ENCODE measurements at regions of chr22 and their contacts with region 1.

Region 1: DNA sequence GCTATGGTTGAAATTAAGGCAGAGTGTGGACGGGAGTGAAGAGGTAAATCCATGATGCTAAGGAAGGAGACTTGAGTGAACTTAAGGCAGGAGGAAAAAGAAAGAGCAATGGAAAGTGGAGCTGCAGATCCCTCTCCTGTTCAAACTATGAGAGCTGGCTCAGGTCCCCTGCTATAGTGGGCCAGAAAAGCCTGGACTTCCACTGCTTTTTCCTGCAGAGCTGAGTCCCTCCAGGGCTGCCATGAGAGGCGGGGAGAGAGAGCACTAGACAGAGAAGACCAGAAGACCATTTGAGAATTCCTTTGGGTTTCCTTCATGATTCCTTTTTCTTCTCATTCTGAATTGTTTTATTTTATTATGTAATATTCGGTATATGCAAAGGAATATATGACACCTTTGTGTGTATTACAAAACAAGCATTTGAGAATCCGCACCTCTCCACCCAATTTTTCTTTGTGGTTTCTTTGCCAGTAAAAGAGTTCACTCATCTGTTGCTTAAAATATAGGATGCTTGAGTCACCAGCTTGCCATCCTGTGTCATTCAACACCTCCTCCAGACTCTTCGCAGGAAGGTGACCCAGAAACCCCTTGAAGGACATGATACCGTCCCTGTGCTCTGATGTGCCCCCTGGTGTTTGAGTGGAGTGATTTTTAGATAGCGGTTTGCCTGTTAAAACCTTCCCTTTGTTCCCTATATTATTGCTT is 24.4 kb downstream of the SREBF2 start:
- DNase-seq: peak; percentile 65
- ATAC-seq: peak; percentile 92
- H3K4me3 ChIP-seq: no peak overlapping the region
- H3K27ac ChIP-seq: peak overlapping the region; percentile 53
- H3K4me1 ChIP-seq: peaks cover 36 to 42% of the 10 kb centered on the region in 2 experiments
- H3K27me3 ChIP-seq: no peaks in the 10 kb centered on the region
- CTCF ChIP-seq: peak; percentile 64 to 86 (median 76); a peak in 5 of 6 replicates
- POLR2A ChIP-seq: no peak
- RAD21 ChIP-seq: peak; percentile 65

Region 2: GRCh38 chr22:41403532-41404318 is 453.6 kb before region 1 on chr22:
- CTCF ChIA-PET with region 1: no interaction called
- POLR2A ChIA-PET with region 1: no interaction called
- RAD21 ChIA-PET with region 1: no interaction called
- intact Hi-C with region 1: no loop called
- DNase-seq: peak; percentile 81
- ATAC-seq: peak; percentile 98
- H3K4me3 ChIP-seq: no peak overlapping the region
- H3K27ac ChIP-seq: no peak overlapping the region
- H3K4me1 ChIP-seq: peaks cover 11 to 19% of the 10 kb centered on the region in 2 experiments
- H3K27me3 ChIP-seq: no peaks in the 10 kb centered on the region
- CTCF ChIP-seq: peak; percentile 91 to 96 (median 94)
- POLR2A ChIP-seq: no peak
- RAD21 ChIP-seq: peak; percentile 99

Region 3: DNA sequence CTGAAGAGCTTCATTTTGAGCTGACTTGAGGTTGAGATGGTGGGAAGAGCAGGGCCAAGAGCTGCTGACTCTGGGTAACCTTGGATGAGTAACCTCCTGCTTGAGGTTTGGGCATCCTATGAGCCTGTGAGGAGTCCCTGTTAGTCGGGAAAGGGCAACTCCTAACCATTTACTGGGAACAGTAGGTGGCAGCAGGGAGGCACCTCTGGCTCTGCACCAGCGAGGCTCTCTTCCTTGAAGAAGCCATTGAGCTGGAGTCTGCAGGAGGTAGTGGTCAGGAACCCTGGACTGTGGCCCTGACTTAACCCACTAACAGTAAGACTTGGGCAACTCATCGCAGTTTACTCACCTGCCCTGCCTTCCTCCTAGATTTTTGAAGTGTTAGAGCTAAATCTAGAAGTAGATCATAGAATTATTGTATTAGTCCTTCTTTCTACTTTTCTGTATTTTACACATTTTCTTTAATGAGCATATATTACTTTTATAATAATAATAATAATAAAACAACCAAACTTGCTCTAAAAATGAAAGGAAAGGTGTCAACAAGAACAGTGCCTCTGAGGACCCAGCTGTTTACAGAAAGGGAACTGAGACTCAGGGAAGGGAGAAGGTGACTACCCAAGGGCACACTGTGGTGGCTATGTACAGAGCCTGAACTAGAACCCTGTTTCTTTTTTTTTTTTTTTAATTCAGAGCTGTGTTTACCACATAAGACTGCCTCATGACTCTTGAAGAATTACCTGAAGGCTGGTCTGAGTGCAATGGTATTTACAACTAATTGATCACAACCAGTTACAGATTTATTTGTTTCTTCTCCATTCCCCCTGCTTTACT is 110.5 kb before region 1 on chr22:
- CTCF ChIA-PET with region 1: interaction called, 15 read pairs
- POLR2A ChIA-PET with region 1: no interaction called
- RAD21 ChIA-PET with region 1: no interaction called
- intact Hi-C with region 1: loop called (anchors 2 kb)
- DNase-seq: peak; percentile 69
- ATAC-seq: peak; percentile 100
- H3K4me3 ChIP-seq: no peak overlapping the region
- H3K27ac ChIP-seq: no peak overlapping the region
- H3K4me1 ChIP-seq: peaks cover 0 to 5% of the 10 kb centered on the region in 2 experiments; a peak in 2 of 4 replicates
- H3K27me3 ChIP-seq: no peaks in the 10 kb centered on the region; the same call in 1 of the 2 replicates
- CTCF ChIP-seq: peak; percentile 69 to 85 (median 81); a peak in 5 of 6 replicates
- POLR2A ChIP-seq: no peak
- RAD21 ChIP-seq: peak; percentile 82

Region 4: GRCh38 chr22:41822317-41823060 is 34.8 kb before region 1 on chr22:
- CTCF ChIA-PET with region 1: interaction called, 7 read pairs
- POLR2A ChIA-PET with region 1: no interaction called
- RAD21 ChIA-PET with region 1: no interaction called
- intact Hi-C with region 1: loop called (anchors 1 kb)
- DNase-seq: peak; percentile 62
- ATAC-seq: peak; percentile 85
- H3K4me3 ChIP-seq: no peak overlapping the region
- H3K27ac ChIP-seq: no peak overlapping the region
- H3K4me1 ChIP-seq: peaks cover 5 to 10% of the 10 kb centered on the region in 2 experiments; a peak in 3 of 4 replicates
- H3K27me3 ChIP-seq: no peaks in the 10 kb centered on the region
- CTCF ChIP-seq: peak; percentile 46 to 68 (median 65); a peak in 5 of 6 replicates
- POLR2A ChIP-seq: no peak
- RAD21 ChIP-seq: peak; percentile 77

Region 5: GRCh38 chr22:41832553-41833368 is 24.5 kb before region 1 on chr22 and contains the start of gene SREBF2:
- CTCF ChIA-PET with region 1: interaction called, 11 read pairs
- POLR2A ChIA-PET with region 1: interaction called, 4 read pairs
- RAD21 ChIA-PET with region 1: no interaction called
- intact Hi-C with region 1: no loop called
- DNase-seq: peak; percentile 99
- ATAC-seq: peak; percentile 94
- H3K4me3 ChIP-seq: peak within 1 kb of the TSS; percentile 78 to 85
- H3K27ac ChIP-seq: peak within 1 kb of the TSS; percentile 89
- H3K4me1 ChIP-seq: peaks cover 18 to 30% of the 10 kb centered on the region in 2 experiments
- H3K27me3 ChIP-seq: no peaks in the 10 kb centered on the region
- CTCF ChIP-seq: no peak
- POLR2A ChIP-seq: peak; percentile 22
- RAD21 ChIP-seq: no peak
- total RNA-seq, gene SREBF2: 129 TPM

Region 6: GRCh38 chr22:41925655-41926460 is 68.6 kb after region 1 on chr22:
- CTCF ChIA-PET with region 1: no interaction called
- POLR2A ChIA-PET with region 1: no interaction called
- RAD21 ChIA-PET with region 1: no interaction called
- intact Hi-C with region 1: no loop called
- DNase-seq: no peak
- ATAC-seq: peak; percentile 78
- H3K4me3 ChIP-seq: no peak overlapping the region
- H3K27ac ChIP-seq: no peak overlapping the region
- H3K4me1 ChIP-seq: peaks cover 2 to 7% of the 10 kb centered on the region in 2 experiments; a peak in 1 of 4 replicates
- H3K27me3 ChIP-seq: no peaks in the 10 kb centered on the region
- CTCF ChIP-seq: peak; percentile 34 to 79 (median 73); a peak in 5 of 6 replicates
- POLR2A ChIP-seq: no peak
- RAD21 ChIP-seq: no peak